Panc1 (cell line): ENCODE measurements at regions of chr14 and their contacts with region 1.

Region 1: DNA sequence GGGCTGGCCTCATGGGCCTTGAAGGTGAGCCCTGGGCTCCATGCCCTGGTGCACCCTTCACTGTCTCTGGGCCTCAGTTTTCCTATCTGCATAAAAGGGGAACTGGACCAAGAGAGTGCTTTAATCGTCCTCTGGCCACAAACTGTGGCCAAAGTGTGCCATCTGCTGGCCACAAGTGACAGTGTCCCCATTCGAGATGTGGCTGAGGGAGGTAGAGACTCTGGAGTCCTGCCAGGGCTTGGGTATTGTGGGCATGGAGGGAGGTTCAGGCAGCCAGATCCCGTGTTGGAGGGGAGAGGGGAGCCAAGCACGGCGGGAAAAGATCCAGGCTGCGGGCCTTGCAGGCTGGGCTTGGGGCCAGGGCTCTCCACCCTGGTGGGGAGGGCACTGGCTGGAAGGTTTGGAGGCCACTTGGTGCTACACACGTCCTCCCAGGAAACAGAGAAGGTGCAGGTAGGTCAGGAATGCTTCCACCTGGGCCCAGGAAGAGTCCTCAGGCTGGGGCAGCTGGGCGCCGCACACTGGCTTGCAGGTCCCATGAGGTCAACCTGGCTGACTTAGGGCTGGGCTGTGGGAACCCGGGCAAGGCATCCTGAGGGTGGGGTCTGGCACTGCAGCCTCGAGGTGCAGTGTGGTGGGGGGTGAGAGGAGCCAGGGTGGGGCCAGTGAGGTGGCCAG is 7.3 kb upstream of the KIF26A start:
- DNase-seq: no peak
- ATAC-seq: peak; percentile 70; the same call in 1 of the 2 replicates
- H3K4me3 ChIP-seq: no peak overlapping the region
- H3K27ac ChIP-seq: no peak overlapping the region
- H3K4me1 ChIP-seq: no peaks in the 10 kb centered on the region
- H3K27me3 ChIP-seq: no peaks in the 10 kb centered on the region
- CTCF ChIP-seq: peak; percentile 78

Region 2: DNA sequence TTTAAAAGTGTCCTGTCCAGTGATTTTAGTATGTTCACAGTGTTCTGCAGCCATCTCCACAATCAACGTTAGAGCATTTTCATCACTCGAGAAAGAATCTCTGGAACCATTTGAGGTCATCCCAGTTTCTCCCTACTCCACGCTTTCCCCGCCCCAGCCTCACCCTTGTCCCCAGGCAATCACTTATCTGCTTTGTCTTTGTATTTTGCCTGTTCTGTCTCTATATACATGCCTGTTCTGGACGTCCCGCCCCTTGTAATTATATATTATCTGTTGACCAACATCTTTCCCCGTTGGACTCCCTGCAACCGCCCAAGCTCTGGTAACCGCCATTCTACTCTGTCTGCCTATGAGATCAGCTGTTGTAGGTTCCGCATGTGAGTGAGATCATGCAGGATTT is 67.1 kb before region 1 on chr14:
- CTCF ChIA-PET with region 1: no interaction called
- POLR2A ChIA-PET with region 1: no interaction called
- in situ Hi-C with region 1: no loop called
- intact Hi-C with region 1: no loop called
- DNase-seq: no peak
- ATAC-seq: no peak
- H3K4me3 ChIP-seq: no peak overlapping the region
- H3K27ac ChIP-seq: no peak overlapping the region
- H3K4me1 ChIP-seq: no peaks in the 10 kb centered on the region
- H3K27me3 ChIP-seq: no peaks in the 10 kb centered on the region
- CTCF ChIP-seq: no peak

Region 3: GRCh38 chr14:104078031-104078455 is 53.1 kb before region 1 on chr14:
- CTCF ChIA-PET with region 1: interaction called, 3 read pairs
- POLR2A ChIA-PET with region 1: no interaction called
- in situ Hi-C with region 1: no loop called
- intact Hi-C with region 1: loop called (anchors 2 kb)
- DNase-seq: peak; percentile 81
- ATAC-seq: peak; percentile 96
- H3K4me3 ChIP-seq: no peak overlapping the region
- H3K27ac ChIP-seq: no peak overlapping the region
- H3K4me1 ChIP-seq: 0 out of 2 replicates have a peak, but pooled peaks cover 3% of the 10 kb centered on the region
- H3K27me3 ChIP-seq: no peaks in the 10 kb centered on the region
- CTCF ChIP-seq: peak; percentile 99

Region 4: GRCh38 chr14:104094709-104095438 is 36.2 kb before region 1 on chr14:
- CTCF ChIA-PET with region 1: interaction called, 3 read pairs
- POLR2A ChIA-PET with region 1: no interaction called
- in situ Hi-C with region 1: no loop called
- intact Hi-C with region 1: loop called (anchors 5 kb)
- DNase-seq: no peak
- ATAC-seq: peak; percentile 85
- H3K4me3 ChIP-seq: no peak overlapping the region
- H3K27ac ChIP-seq: no peak overlapping the region
- H3K4me1 ChIP-seq: no peaks in the 10 kb centered on the region; the same call in 1 of the 2 replicates
- H3K27me3 ChIP-seq: no peaks in the 10 kb centered on the region
- CTCF ChIP-seq: peak; percentile 92